ENCODE measurements at regions of chr16 and their contacts with region 1.

Region 1: DNA sequence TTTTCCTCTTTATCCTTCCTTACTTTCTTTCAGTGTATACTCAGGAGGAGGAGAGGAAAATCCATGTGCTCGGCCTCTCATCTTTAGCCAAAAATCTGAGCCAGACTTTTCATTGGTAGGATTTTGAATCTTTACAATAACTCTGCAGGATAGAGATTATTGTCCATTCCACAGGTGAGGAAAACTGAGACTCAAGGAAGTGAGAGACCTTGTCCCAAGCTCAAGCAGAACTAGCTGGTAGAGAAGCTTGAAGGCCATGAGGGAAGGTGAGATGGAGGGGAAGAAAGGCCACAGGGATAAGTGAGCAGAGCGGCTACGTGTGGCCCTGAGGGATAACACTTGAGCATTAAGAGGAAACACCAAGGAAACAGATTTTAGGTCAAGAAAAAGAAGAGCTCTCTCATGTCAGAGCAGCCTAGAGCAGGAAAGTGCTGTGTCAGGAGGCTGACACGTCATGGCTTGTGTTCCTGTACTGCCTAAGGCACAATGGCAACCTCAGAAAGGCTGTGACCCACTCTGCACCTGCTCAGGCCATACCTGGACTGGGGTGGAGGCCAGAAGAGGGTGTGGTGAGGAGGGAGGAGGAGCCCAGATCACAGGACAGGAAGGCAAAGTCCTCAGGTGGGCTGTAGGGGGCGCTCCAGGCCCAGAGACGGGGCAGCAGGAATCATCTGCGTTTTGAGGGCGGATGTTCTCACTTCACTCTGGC is 11.9 kb downstream of the MT4 start:
- DNase-seq: peak; percentile 81
- H3K4me3 Mint-ChIP-seq: no peak overlapping the region
- H3K27ac Mint-ChIP-seq: no peak overlapping the region
- H3K4me1 Mint-ChIP-seq: peaks cover 10% of the 10 kb centered on the region
- H3K27me3 Mint-ChIP-seq: peaks cover 23% of the 10 kb centered on the region

Region 2: GRCh38 chr16:56600398-56600999 is 23.8 kb after region 1 on chr16:
- intact Hi-C with region 1: loop called (anchors 1 kb)
- DNase-seq: no peak
- H3K4me3 Mint-ChIP-seq: no peak overlapping the region
- H3K27ac Mint-ChIP-seq: no peak overlapping the region
- H3K4me1 Mint-ChIP-seq: peaks cover 4% of the 10 kb centered on the region
- H3K27me3 Mint-ChIP-seq: peaks cover 26% of the 10 kb centered on the region

Region 3: GRCh38 chr16:56643080-56643778 is 66.5 kb after region 1 on chr16:
- intact Hi-C with region 1: loop called (anchors 2 kb)
- DNase-seq: peak; percentile 75
- H3K4me3 Mint-ChIP-seq: peak overlapping the region; percentile 70
- H3K27ac Mint-ChIP-seq: no peak overlapping the region
- H3K4me1 Mint-ChIP-seq: peaks cover 25% of the 10 kb centered on the region
- H3K27me3 Mint-ChIP-seq: peaks cover 52% of the 10 kb centered on the region

Region 4: GRCh38 chr16:56667581-56668571 is 91.1 kb after region 1 on chr16 and contains the start of gene MT1G:
- intact Hi-C with region 1: no loop called
- DNase-seq: peak; percentile 41
- H3K4me3 Mint-ChIP-seq: peak within 1 kb of the TSS; percentile 66
- H3K27ac Mint-ChIP-seq: no peak within 1 kb of the TSS
- H3K4me1 Mint-ChIP-seq: peaks cover 55% of the 10 kb centered on the region
- H3K27me3 Mint-ChIP-seq: peaks cover 58% of the 10 kb centered on the region
- total RNA-seq, gene MT1G: 28.5 and 29.1 TPM in 2 replicates

Region 5: GRCh38 chr16:56729735-56730662 is 153.3 kb after region 1 on chr16 and contains the start of gene NUP93:
- intact Hi-C with region 1: loop called (anchors 1 kb)
- DNase-seq: peak; percentile 87
- H3K4me3 Mint-ChIP-seq: no peak within 1 kb of the TSS
- H3K27ac Mint-ChIP-seq: peak within 1 kb of the TSS; percentile 88
- H3K4me1 Mint-ChIP-seq: peaks cover 13% of the 10 kb centered on the region
- H3K27me3 Mint-ChIP-seq: peaks cover 2% of the 10 kb centered on the region
- total RNA-seq, gene NUP93: 150 and 152 TPM in 2 replicates

Region 6: DNA sequence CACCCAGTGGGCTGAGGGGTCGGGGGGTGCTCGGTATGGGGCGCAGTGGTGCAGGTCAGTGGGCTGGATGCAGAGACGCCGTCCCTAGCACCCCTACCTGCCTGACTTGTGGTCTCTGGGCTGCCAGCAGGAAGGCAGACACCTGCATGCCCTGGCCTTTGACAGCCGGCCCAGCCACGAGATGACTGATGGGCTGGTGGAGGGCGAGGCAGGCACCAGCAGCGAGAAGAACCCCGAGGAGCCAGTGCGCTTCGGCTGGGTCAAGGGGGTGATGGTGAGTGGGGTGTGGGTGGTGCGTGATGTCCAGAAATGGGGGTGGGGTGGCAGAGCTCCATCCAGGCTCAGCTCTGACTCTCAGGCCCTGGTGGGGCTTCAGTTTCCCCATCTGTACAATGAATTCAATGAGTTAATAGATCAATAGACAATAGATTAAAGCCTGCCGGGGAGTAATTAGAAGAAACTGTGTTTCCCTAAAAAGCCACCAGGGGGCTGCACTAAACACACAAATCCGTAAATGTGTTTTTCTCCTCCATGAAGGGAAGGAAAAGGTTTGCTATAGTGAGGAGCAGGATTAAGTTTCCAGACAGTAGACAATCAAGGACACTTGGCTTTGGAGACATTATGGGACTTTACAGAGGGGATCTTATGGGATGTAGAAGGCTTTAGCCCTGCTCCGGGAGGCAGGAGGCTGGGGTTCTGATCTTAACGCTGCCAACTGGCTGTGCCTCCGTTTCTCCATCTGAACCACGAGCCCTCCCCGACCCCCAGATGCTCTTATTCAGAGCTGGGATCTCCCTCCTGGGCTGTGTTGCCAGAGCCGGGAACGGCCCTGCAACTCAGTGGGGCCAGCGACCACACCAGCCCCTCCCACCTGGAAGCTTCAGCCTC is 290.4 kb after region 1 on chr16:
- intact Hi-C with region 1: loop called (anchors 5 kb)
- DNase-seq: peak; percentile 24
- H3K4me3 Mint-ChIP-seq: no peak overlapping the region
- H3K27ac Mint-ChIP-seq: no peak overlapping the region
- H3K4me1 Mint-ChIP-seq: peaks cover 22% of the 10 kb centered on the region
- H3K27me3 Mint-ChIP-seq: no peaks in the 10 kb centered on the region

Measured in activated T-helper 1 cell treated with anti-CD3 and anti-CD28 coated beads, Interleukin-12 subunit alpha, Interleukin-12 subunit beta, Interleukin-2, Interleukin-4 antibody, amounts not matched to agents 30 ng/mL and 10 ng/mL and 1 ng/mL, durations not matched to agents 14 hours and 24 hours and 36 hours (primary cell).